ENCODE measurements at regions of chr19 and their contacts with region 1.

Region 1: DNA sequence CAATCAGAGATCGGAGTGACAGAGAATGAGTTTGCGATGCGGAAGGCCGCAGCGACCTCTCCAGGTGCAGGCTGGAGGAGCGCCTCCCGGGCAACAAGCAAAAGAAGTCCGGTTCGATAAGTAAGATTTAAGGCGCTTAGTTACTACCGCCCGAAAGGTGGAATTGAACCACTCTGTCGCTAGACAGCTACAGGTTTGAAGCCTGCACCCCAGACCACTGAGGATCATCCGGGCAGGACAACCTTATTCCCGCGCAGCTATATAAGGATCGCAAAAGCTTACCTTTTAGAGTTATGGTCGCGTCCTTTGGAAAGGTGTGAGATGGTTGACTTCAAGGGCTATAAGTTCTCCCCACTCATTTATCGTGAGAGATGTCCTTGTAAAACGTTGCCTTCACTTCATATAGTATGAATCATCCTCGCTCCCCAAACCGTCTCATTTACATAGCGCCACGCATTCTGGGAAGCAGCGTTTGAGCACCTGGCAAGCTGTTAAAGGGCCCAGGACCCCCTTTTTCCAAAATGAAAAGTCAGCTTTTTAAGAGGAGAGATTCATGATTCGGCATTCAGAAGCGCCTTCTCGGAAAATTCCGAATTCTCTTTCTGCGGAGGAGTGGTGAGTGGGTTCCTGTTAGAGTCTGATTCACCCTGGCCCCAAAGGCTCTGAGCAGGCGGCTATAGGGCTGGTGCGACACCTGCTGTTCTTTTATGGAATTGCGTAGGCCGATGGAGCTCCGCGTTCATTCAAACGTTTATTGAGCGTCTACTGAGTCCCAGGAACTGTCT is 10.8 kb downstream of the FOSB start:
- DNase-seq: peak; percentile 97
- H3K4me3 Mint-ChIP-seq: peak overlapping the region; percentile 68
- H3K27ac Mint-ChIP-seq: peak overlapping the region; percentile 91
- H3K4me1 Mint-ChIP-seq: peaks cover 29% of the 10 kb centered on the region
- H3K27me3 Mint-ChIP-seq: peaks cover 32% of the 10 kb centered on the region

Region 2: GRCh38 chr19:45423589-45424190 is 55.0 kb before region 1 on chr19 and contains the start of gene ERCC1:
- intact Hi-C with region 1: loop called (anchors 1 kb)
- DNase-seq: peak; percentile 96
- H3K4me3 Mint-ChIP-seq: peak within 1 kb of the TSS; percentile 100
- H3K27ac Mint-ChIP-seq: peak within 1 kb of the TSS; percentile 98
- H3K4me1 Mint-ChIP-seq: peaks cover 55% of the 10 kb centered on the region
- H3K27me3 Mint-ChIP-seq: peaks cover 7% of the 10 kb centered on the region
- total RNA-seq, gene ERCC1: 123 and 124 TPM in 2 replicates

Region 3: GRCh38 chr19:45455707-45456499 is 22.7 kb before region 1 on chr19:
- intact Hi-C with region 1: loop called (anchors 1 kb)
- DNase-seq: peak; percentile 76
- H3K4me3 Mint-ChIP-seq: peak overlapping the region; percentile 65
- H3K27ac Mint-ChIP-seq: peak overlapping the region; percentile 76
- H3K4me1 Mint-ChIP-seq: peaks cover 29% of the 10 kb centered on the region
- H3K27me3 Mint-ChIP-seq: peaks cover 25% of the 10 kb centered on the region

Measured in activated CD4-positive, alpha-beta T cell treated with anti-CD3 and anti-CD28 coated beads, Interleukin-2, amount 10 ng/mL, durations not matched to agents 24 days and 14 days (primary cell).